Psoas muscle (tissue), 8 donors: ENCODE measurements at regions of chrX and their contacts with region 1.

Region 1: DNA sequence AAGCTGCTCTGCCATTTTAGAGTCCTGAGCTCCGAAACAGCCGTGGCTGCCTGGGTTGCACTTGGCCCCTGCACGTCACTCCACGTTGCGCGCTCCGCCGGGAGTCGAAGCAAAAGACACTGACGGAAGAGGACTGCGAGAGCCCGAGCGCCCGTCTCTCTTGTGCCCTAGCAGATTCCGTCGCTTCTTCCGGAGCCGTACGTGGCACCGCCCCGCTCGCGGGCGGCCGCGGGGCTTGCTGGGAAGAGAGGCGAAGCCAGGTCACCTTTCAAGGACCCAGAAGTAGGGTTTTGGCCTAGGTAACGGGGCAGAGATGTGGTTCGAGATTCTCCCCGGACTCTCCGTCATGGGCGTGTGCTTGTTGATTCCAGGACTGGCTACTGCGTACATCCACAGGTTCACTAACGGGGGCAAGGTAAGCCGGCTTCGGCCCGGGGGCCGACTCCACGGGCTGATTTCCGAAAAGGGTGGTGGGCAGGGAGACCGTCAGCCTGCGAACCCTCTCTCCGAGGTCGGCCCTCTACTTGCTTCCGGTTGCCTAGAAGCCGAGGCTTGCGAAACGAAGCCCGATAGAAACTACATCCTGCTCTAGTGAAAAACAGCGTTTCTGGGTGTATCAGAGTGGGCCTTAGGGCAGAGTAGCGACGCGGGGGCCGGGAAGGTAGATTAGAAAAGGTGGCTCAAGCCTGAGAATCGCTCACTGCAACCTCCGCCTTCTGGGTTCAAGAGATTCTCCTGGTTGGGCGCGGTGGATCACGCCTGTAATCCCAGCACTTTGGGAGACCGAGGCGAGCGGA is at the starts of genes NDUFA1 and RNF113A:
- DNase-seq: peak; percentile 85 to 92
- ATAC-seq: peak; percentile 97 to 98 (median 98)
- H3K4me3 ChIP-seq: peak within 1 kb of the TSS; percentile 61
- H3K27ac ChIP-seq: peak within 1 kb of the TSS; percentile 91
- H3K4me1 ChIP-seq: peaks cover 13% of the 10 kb centered on the region
- H3K27me3 ChIP-seq: no peaks in the 10 kb centered on the region
- CTCF ChIP-seq: no peak
- total RNA-seq, gene NDUFA1: 194 to 237 (median 217) TPM
- total RNA-seq, gene RNF113A: 5.5 to 9.7 (median 8.1) TPM

Region 2: DNA sequence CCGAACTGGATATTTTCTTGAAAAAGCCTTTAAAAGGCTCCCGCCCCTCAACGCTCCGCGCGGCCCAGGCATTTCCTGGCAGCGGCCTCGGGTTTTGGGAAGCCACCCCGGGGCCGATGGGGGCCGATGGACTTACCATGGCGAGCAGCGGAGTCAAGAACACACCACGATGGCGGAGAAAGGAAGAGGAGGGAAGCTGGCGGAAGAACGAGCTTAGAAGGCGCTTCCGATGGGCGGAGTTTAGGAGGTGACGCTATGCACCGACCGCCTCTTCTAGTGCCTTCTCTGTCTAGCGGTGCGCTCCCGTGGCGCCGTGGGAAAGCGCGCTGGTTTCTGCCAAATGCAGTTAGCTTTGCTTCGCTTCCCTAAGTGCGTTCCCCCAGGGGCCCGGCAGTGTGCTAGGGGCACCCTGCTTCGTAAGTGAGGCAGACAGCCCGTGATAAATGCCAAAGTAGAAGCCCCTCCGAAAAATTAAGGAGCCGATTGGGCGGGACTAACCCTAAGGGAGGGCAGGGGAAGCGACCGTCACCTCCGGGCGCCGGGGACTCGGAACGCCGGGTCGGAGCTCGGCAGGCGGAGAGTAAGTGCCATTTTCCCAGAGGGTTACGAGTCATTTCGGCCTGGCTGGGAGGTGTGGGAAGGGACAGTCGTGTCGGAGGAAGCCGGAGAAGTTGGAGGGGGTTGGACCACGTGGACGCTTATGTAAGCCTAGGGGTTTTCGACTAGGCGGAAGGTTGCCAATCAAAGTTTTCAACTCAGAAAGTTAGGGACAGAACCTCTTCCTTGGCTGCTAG is 80.2 kb before region 1 on chrX and contains the start of gene RPL39:
- intact Hi-C with region 1: loop called in 1 of 2 experiments (anchors 5 kb)
- DNase-seq: peak; percentile 79 to 89
- ATAC-seq: peak; percentile 94 to 97 (median 94)
- H3K4me3 ChIP-seq: peak within 1 kb of the TSS; percentile 81
- H3K27ac ChIP-seq: peak within 1 kb of the TSS; percentile 88
- H3K4me1 ChIP-seq: peaks cover 4% of the 10 kb centered on the region
- H3K27me3 ChIP-seq: no peaks in the 10 kb centered on the region
- CTCF ChIP-seq: no peak
- total RNA-seq, gene RPL39: 1,072 to 1,581 (median 1,334) TPM